Caco-2 (cell line): ENCODE measurements at regions of chr13 and their contacts with region 1.

Region 1: GRCh38 chr13:110262508-110263291 is 44.3 kb downstream of the COL4A1 start:
- DNase-seq: no peak
- H3K4me3 ChIP-seq: no peak overlapping the region
- H3K4me3 Mint-ChIP-seq: peak overlapping the region; percentile 14
- H3K27ac Mint-ChIP-seq: peak overlapping the region; percentile 52
- H3K4me1 ChIP-seq: peaks cover 38% of the 10 kb centered on the region
- H3K4me1 Mint-ChIP-seq: peaks cover 31% of the 10 kb centered on the region
- H3K27me3 ChIP-seq: no peaks in the 10 kb centered on the region
- H3K27me3 Mint-ChIP-seq: no peaks in the 10 kb centered on the region
- CTCF ChIP-seq: no peak

Region 2: DNA sequence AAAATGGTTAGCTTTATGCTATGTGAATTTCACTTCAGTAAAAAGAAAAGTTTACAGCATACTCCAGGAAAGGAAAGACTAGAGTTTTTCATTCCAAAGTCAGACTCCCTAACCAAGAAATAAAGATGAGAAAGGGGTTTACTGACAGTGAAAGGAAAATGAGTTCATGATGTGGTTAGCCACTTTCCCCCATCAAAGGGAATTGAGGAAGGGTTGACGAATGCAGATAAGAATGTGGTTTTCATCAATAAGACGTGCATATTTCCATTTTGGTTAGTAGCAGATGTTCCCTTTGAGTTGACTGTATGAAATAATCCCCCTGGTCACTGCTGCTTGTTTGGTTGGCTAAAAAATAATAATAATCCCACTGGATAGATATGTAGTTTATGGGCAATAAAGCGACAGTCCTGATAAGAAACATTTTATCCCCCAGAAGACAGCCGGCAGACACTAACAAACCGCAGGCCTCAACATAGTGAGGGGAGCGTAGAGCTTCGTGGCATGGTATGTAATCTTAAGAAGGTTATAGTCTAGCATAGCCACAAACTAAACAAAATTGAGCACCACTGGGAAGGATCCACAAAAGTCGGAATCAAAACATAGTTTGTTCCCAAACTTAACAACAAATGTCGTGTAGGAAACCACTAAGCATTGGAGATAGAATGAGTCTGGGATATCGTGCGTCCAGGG is 159.1 kb after region 1 on chr13:
- CTCF ChIA-PET with region 1: no interaction called
- POLR2A ChIA-PET with region 1: no interaction called
- intact Hi-C with region 1: no loop called
- DNase-seq: no peak
- H3K4me3 ChIP-seq: no peak overlapping the region
- H3K4me3 Mint-ChIP-seq: no peak overlapping the region
- H3K27ac Mint-ChIP-seq: peak overlapping the region; percentile 56
- H3K4me1 ChIP-seq: peaks cover under 1% of the 10 kb centered on the region
- H3K4me1 Mint-ChIP-seq: no peaks in the 10 kb centered on the region
- H3K27me3 ChIP-seq: no peaks in the 10 kb centered on the region
- H3K27me3 Mint-ChIP-seq: no peaks in the 10 kb centered on the region
- CTCF ChIP-seq: no peak

Region 3: GRCh38 chr13:110771194-110771593 is 508.5 kb after region 1 on chr13:
- CTCF ChIA-PET with region 1: no interaction called
- POLR2A ChIA-PET with region 1: interaction called, 13 read pairs
- intact Hi-C with region 1: no loop called
- DNase-seq: no peak
- H3K4me3 ChIP-seq: no peak overlapping the region
- H3K4me3 Mint-ChIP-seq: no peak overlapping the region
- H3K27ac Mint-ChIP-seq: no peak overlapping the region
- H3K4me1 ChIP-seq: no peaks in the 10 kb centered on the region
- H3K4me1 Mint-ChIP-seq: no peaks in the 10 kb centered on the region
- H3K27me3 ChIP-seq: no peaks in the 10 kb centered on the region; the same call in 1 of the 2 replicates
- H3K27me3 Mint-ChIP-seq: peaks cover 16% of the 10 kb centered on the region
- CTCF ChIP-seq: no peak